Activated T-helper 1 cell treated with anti-CD3 and anti-CD28 coated beads, Interleukin-12 subunit alpha, Interleukin-12 subunit beta, Interleukin-2, Interleukin-4 antibody, amounts not matched to agents 30 ng/mL and 10 ng/mL and 1 ng/mL, durations not matched to agents 14 hours and 24 hours and 36 hours (primary cell): ENCODE measurements at regions of chr4 and their contacts with region 1.

Region 1: DNA sequence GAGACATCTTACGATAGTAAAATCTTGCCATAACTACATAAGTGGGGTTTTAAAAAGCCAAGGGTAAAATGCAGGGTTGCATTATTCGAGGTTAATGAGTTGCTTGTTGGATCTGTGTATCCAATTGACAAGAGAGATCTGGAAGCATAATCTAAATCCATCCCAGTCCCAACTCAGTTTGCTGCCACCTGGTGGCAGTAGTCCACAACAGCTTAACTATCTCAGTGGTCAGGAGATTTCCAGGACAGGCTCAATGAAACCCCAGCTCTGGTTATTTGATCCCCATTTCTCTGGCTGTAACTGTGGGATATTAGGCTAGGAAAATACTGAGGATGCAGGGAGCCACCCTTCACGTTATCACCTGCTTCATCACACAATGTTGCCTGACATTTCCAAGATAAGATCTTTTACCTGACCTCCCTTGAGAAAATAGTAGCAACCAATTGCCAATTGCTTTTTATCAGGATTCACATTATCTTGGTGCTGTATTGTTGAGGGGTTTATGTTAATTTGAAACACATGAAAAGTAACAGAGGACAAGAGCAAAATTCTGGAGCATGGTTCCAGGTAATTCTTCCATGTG is 88.2 kb upstream of the TNIP3 start:
- DNase-seq: peak; percentile 21
- H3K4me3 Mint-ChIP-seq: no peak overlapping the region
- H3K27ac Mint-ChIP-seq: no peak overlapping the region
- H3K4me1 Mint-ChIP-seq: peaks cover 66% of the 10 kb centered on the region
- H3K27me3 Mint-ChIP-seq: peaks cover 6% of the 10 kb centered on the region

Region 2: GRCh38 chr4:121139533-121140222 is 112.6 kb before region 1 on chr4:
- intact Hi-C with region 1: loop called (anchors 1 kb)
- DNase-seq: no peak
- H3K4me3 Mint-ChIP-seq: peak overlapping the region; percentile 31
- H3K27ac Mint-ChIP-seq: peak overlapping the region; percentile 69
- H3K4me1 Mint-ChIP-seq: peaks cover 41% of the 10 kb centered on the region
- H3K27me3 Mint-ChIP-seq: no peaks in the 10 kb centered on the region

Region 3: GRCh38 chr4:121278811-121279368 is 26.6 kb after region 1 on chr4:
- intact Hi-C with region 1: loop called (anchors 1 kb)
- DNase-seq: no peak
- H3K4me3 Mint-ChIP-seq: no peak overlapping the region
- H3K27ac Mint-ChIP-seq: no peak overlapping the region
- H3K4me1 Mint-ChIP-seq: peaks cover 6% of the 10 kb centered on the region
- H3K27me3 Mint-ChIP-seq: peaks cover 8% of the 10 kb centered on the region

Region 4: DNA sequence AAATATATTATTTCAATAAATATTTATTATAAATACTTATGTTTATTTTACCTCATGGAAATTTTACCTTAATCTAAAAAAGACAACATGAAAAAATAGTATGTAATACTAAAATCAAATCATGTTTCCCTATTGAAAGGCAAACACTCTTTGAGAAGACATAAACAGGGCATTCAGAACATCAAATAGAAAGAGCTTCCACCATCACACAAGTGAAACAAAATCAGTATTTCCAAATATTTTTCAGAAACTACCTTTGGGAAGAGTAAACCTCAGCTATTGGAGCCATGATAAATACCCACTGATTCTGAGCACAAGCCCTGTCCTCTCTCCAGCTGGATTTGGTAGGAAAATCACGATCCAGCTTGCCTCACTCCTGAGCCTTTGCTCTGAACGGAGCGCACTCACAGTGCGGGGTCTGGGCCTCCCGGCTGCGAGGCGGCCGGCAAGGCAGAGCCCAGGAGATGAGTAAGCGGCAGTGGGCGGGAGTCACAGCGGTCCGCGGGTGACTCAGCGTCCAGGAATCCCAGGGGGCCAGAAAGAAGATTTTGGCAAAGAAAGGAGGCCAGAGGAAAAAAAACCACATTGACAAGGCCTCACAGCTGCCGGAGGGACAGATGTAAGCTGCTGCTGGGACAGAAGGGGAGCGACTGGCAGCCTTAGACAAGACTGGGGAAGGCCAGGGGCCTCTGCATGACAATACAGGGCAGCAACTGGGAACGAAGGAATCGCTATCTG is 459.1 kb after region 1 on chr4:
- intact Hi-C with region 1: loop called (anchors 5 kb)
- DNase-seq: peak; percentile 10
- H3K4me3 Mint-ChIP-seq: peak overlapping the region; percentile 45
- H3K27ac Mint-ChIP-seq: no peak overlapping the region
- H3K4me1 Mint-ChIP-seq: peaks cover 51% of the 10 kb centered on the region
- H3K27me3 Mint-ChIP-seq: peaks cover 24% of the 10 kb centered on the region